Left colon (tissue), 2 donors: ENCODE measurements at regions of chr14 and their contacts with region 1.

Region 1: GRCh38 chr14:94136575-94137331 is 7.3 kb upstream of the IFI27L2 start:
- DNase-seq: peak; percentile 77 to 94
- ATAC-seq: peak; percentile 97

Region 2: DNA sequence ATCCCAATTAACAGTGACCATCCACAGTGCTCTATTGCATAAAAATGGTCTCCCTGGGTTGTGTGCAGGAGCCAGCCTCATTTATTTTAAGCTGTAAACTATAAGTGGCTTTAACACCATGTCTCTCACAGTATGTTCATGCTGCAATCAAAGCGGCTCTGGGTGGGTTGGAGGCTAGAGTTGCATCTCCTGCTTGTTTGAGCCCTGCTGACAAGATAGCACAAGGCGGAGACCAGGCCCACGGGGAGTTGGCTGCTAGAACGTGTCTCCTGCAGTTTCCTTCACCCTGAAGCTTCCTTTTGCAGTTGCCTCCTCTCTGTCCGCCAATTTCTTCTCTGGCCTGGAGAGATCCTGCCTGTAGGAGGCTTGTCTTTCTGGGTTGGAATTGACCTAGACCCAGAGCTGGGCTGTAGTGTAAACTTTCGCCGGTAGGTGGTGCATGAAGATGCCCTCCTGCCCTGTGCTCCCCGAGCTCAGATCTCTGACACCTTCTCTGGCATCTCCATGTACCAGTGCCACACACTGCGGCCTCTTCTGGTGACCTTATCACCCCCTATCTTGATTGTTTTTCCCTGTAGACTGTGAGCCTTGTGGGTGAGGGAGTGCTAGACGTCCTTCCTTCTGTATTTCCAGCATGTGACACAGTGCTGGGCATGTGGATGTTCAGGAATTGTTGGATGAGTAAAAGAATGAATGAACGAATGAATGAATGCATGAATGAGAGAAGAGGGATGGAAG is 100.3 kb before region 1 on chr14:
- intact Hi-C with region 1: loop called in 1 of 2 experiments (anchors 5 kb)
- DNase-seq: peak; percentile 56 to 86
- ATAC-seq: peak; percentile 86

Region 3: GRCh38 chr14:94051115-94051514 is 85.6 kb before region 1 on chr14:
- intact Hi-C with region 1: loop called in 1 of 2 experiments (anchors 10 kb)
- DNase-seq: peak in 1 of 2 donors; percentile 68
- ATAC-seq: peak; percentile 69